ENCODE measurements at regions of chr22 and their contacts with region 1.

Region 1: DNA sequence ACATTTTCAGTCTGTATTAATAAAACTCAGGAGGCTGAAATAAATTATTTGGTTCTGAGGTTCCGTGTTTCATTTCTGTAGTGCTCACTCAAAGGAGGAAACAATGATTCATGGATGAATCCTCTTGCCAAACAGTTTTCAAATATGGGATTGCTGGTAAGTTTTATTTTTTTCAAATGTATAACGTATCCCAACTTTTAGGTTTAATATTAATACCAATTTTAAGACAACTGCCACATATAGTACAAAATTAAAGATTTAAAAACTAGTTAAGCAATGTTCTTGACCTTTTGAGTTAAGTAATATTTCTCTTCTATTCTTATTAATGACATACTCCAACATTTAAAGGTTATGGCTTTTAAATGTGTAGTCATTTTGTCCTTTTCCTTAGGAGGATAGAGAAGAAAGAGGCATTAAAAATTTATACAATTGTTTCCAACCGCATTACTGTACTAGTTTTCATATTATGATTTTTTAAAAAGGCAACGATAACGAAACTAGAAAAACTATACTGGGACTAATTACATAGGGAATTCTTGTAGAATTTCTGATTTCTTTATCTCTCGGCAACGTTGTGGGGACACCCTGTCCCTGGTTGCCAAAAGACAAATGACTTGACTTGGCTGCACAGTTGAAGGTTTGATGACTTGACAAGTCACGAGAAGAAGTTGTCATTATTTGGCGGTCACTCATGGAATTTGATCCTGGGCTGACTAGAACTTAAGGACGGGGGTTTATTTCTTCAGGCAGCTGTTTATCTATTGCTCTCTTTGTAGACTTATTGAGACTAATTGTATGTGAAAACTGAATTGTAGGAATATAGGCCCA is 69.1 kb upstream of the ADSL start:
- DNase-seq: no peak
- ATAC-seq: peak; percentile 65
- H3K4me3 ChIP-seq: peak overlapping the region in 1 of 2 donors; percentile 50
- H3K27ac ChIP-seq: peak overlapping the region in 1 of 2 donors; percentile 55
- H3K4me1 ChIP-seq: peaks cover 3% of the 10 kb centered on the region in 2 donors
- H3K27me3 ChIP-seq: no peaks in the 10 kb centered on the region

Region 2: DNA sequence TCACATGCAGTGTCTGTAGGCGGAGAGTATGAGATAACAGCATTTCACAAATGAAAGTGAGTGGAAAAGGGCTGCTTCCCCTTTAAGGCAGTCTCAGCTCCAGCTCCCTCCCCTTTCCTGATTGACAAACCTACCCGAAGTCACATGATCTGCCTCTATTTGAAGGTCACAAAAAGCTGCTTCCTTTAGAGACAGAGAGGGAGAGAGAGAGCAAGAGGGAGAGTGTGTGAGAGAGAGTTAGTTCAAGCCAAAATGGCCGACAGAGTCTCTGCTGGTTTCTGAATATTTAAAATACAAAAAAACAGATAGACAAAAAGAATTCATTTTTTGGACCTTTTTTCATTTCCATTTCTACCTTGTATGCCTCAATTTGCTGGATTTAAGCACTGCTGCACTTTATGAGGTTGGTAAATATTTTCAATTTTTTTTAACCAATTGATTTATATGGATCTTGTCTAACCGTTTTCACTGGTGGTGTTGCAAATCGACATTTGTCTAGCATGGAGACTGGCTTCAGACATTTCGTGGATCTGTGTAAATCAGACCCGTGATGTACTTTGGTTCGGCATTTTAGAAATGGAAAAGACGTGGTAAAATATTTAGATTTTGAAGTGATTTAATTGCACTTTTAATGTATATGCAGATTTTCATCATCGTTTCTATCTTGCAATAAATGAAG is 99.3 kb before region 1 on chr22 and contains the start of gene TNRC6B:
- intact Hi-C with region 1: loop called (anchors 5 to 10 kb)
- DNase-seq: peak in 1 of 2 donors; percentile 79
- ATAC-seq: peak; percentile 96
- H3K4me3 ChIP-seq: peak within 1 kb of the TSS; percentile 89 to 98
- H3K27ac ChIP-seq: peak within 1 kb of the TSS; percentile 24 to 84
- H3K4me1 ChIP-seq: peaks cover under 1 to 9% of the 10 kb centered on the region in 2 donors
- H3K27me3 ChIP-seq: no peaks in the 10 kb centered on the region
- total RNA-seq, gene TNRC6B: 81.8 to 85.0 TPM

Region 3: GRCh38 chr22:40183029-40183581 is 94.1 kb before region 1 on chr22:
- intact Hi-C with region 1: loop called (anchors 5 to 10 kb)
- DNase-seq: no peak
- ATAC-seq: no peak
- H3K4me3 ChIP-seq: no peak overlapping the region
- H3K27ac ChIP-seq: peak overlapping the region; percentile 12 to 74
- H3K4me1 ChIP-seq: peaks cover 7 to 8% of the 10 kb centered on the region in 2 donors
- H3K27me3 ChIP-seq: no peaks in the 10 kb centered on the region

Measured in aorta (tissue), 5 donors.